ENCODE measurements at regions of chr5 and their contacts with region 1.

Region 1: GRCh38 chr5:148831590-148832565 is 5.5 kb downstream of the ADRB2 start:
- DNase-seq: no peak
- ATAC-seq: peak in 4 of 8 donors; percentile 18 to 47 (median 25)
- H3K4me3 ChIP-seq: peak overlapping the region in 7 of 10 donors; percentile 1 to 76 (median 70)
- H3K27ac ChIP-seq: peak overlapping the region in 9 of 10 donors; percentile 9 to 97 (median 65)
- H3K4me1 ChIP-seq: peaks cover 0 to 93% (median 59%) of the 10 kb centered on the region in 9 donors
- H3K27me3 ChIP-seq: no peaks in the 10 kb centered on the region
- CTCF ChIP-seq: no peak

Region 2: DNA sequence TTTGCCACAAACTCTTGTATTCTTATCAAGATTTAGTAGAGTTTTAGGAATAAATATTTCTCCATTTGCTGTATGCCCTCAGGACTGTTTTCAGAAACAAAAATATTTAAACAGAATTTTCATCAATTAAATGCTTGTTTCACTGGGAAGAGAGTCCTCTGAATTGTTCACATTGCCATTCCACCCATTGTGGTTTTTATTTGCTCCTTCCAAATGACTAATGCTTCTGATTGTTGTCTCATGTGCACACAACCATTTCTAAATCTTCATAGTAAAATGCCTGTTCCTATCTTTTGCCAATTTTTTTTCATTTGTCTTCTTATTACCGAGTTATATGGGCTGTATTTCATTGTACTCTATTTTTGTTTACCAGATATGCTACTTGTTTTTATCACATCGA is 583.0 kb before region 1 on chr5:
- intact Hi-C with region 1: no loop called
- DNase-seq: no peak
- ATAC-seq: no peak
- H3K4me3 ChIP-seq: no peak overlapping the region
- H3K27ac ChIP-seq: no peak overlapping the region
- H3K4me1 ChIP-seq: no peaks in the 10 kb centered on the region
- H3K27me3 ChIP-seq: no peaks in the 10 kb centered on the region
- CTCF ChIP-seq: no peak

Region 3: GRCh38 chr5:148864113-148864841 is 32.4 kb after region 1 on chr5:
- intact Hi-C with region 1: loop called in 2 of 10 experiments (anchors 5 kb)
- DNase-seq: peak; percentile 32 to 35
- ATAC-seq: peak; percentile 60 to 89 (median 84)
- H3K4me3 ChIP-seq: no peak overlapping the region
- H3K27ac ChIP-seq: peak overlapping the region; percentile 32 to 86 (median 64)
- H3K4me1 ChIP-seq: peaks cover 0 to 39% (median 24%) of the 10 kb centered on the region in 9 donors
- H3K27me3 ChIP-seq: no peaks in the 10 kb centered on the region
- CTCF ChIP-seq: peak in 2 of 9 donors; percentile 7 to 13

Region 4: GRCh38 chr5:148957591-148958202 is 125.8 kb after region 1 on chr5:
- intact Hi-C with region 1: loop called in 5 of 10 experiments (anchors 2 to 10 kb)
- DNase-seq: no peak
- ATAC-seq: peak in 4 of 8 donors; percentile 38 to 53 (median 46)
- H3K4me3 ChIP-seq: no peak overlapping the region
- H3K27ac ChIP-seq: no peak overlapping the region
- H3K4me1 ChIP-seq: peaks cover 0 to 9% (median 0%) of the 10 kb centered on the region in 9 donors
- H3K27me3 ChIP-seq: no peaks in the 10 kb centered on the region
- CTCF ChIP-seq: peak; percentile 68 to 87 (median 81)